Naive thymus-derived CD4-positive, alpha-beta T cell (primary cell): ENCODE measurements at regions of chr11 and their contacts with region 1.

Region 1: GRCh38 chr11:68839054-68839865 is 2.5 kb downstream of the CPT1A start:
- DNase-seq: peak; percentile 87 to 94 (median 92)
- ATAC-seq: peak; percentile 88
- H3K4me3 ChIP-seq: peak overlapping the region; percentile 81
- H3K4me3 Mint-ChIP-seq: peak overlapping the region; percentile 85 to 93 (median 90)
- H3K27ac ChIP-seq: peak overlapping the region; percentile 73
- H3K27ac Mint-ChIP-seq: peak overlapping the region; percentile 81 to 95 (median 93)
- H3K4me1 ChIP-seq: peaks cover 49% of the 10 kb centered on the region in 2 donors
- H3K4me1 Mint-ChIP-seq: peaks cover 31 to 70% (median 52%) of the 10 kb centered on the region in 7 donors
- H3K27me3 ChIP-seq: no peaks in the 10 kb centered on the region
- H3K27me3 Mint-ChIP-seq: peaks cover 0 to 2% (median 0%) of the 10 kb centered on the region in 5 donors

Region 2: GRCh38 chr11:68751004-68751856 is 88.0 kb before region 1 on chr11 and contains the start of gene TESMIN:
- CTCF ChIA-PET with region 1: interaction called, 4 read pairs
- POLR2A ChIA-PET with region 1: no interaction called
- intact Hi-C with region 1: loop called (anchors 1 kb)
- DNase-seq: peak; percentile 73 to 97 (median 88)
- ATAC-seq: peak; percentile 99
- H3K4me3 ChIP-seq: peak within 1 kb of the TSS; percentile 54
- H3K4me3 Mint-ChIP-seq: peak within 1 kb of the TSS; percentile 65 to 90 (median 78)
- H3K27ac ChIP-seq: no peak within 1 kb of the TSS
- H3K27ac Mint-ChIP-seq: peak within 1 kb of the TSS in 8 of 9 donors; percentile 5 to 84 (median 66)
- H3K4me1 ChIP-seq: no peaks in the 10 kb centered on the region
- H3K4me1 Mint-ChIP-seq: peaks cover 7 to 19% (median 13%) of the 10 kb centered on the region in 7 donors
- H3K27me3 ChIP-seq: no peaks in the 10 kb centered on the region
- H3K27me3 Mint-ChIP-seq: peaks cover 0 to 7% (median 0%) of the 10 kb centered on the region in 5 donors
- total RNA-seq, gene TESMIN: 5.0 to 9.3 (median 6.6) TPM

Region 3: GRCh38 chr11:68855205-68855981 is 16.1 kb after region 1 on chr11:
- CTCF ChIA-PET with region 1: interaction called, 4 read pairs
- POLR2A ChIA-PET with region 1: no interaction called
- intact Hi-C with region 1: loop called in 1 of 2 experiments (anchors 2 kb)
- DNase-seq: peak in 3 of 9 donors; percentile 11 to 29 (median 21)
- ATAC-seq: peak; percentile 69
- H3K4me3 ChIP-seq: peak overlapping the region; percentile 39
- H3K4me3 Mint-ChIP-seq: peak overlapping the region; percentile 7 to 86 (median 74)
- H3K27ac ChIP-seq: no peak overlapping the region
- H3K27ac Mint-ChIP-seq: no peak overlapping the region
- H3K4me1 ChIP-seq: peaks cover 4% of the 10 kb centered on the region in 2 donors
- H3K4me1 Mint-ChIP-seq: peaks cover 0 to 11% (median 5%) of the 10 kb centered on the region in 7 donors
- H3K27me3 ChIP-seq: peaks cover 0 to 6% of the 10 kb centered on the region in 2 donors
- H3K27me3 Mint-ChIP-seq: peaks cover 14 to 55% (median 18%) of the 10 kb centered on the region in 5 donors

Region 4: DNA sequence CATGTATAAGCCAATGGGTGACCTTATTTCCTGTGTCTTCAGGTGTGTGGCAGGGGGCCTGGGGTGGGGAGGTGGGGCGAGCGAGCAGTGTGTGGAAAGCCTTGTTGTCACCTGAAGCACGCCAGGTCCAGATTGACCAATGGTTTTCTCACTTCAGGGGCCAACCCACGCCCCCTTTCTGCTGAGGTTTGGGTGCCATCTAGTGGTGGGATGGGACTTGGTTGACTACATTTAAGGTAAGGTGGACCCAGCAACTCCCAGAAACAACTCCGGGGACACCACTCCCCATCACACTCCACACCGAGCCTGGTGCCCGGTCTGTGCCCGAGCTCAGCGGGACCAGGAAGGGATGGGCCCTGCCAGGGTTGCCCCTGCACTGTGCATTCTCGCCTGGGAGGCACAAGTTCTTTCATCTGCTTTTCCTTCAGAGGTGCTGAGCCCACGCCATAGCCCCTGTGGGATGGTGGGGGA is 249.5 kb after region 1 on chr11:
- CTCF ChIA-PET with region 1: no interaction called
- POLR2A ChIA-PET with region 1: no interaction called
- intact Hi-C with region 1: loop called in 1 of 2 experiments (anchors 5 kb)
- DNase-seq: peak in 7 of 9 donors; percentile 23 to 54 (median 38)
- ATAC-seq: peak; percentile 78
- H3K4me3 ChIP-seq: no peak overlapping the region
- H3K4me3 Mint-ChIP-seq: no peak overlapping the region
- H3K27ac ChIP-seq: no peak overlapping the region
- H3K27ac Mint-ChIP-seq: peak overlapping the region in 2 of 9 donors; percentile 19 to 36
- H3K4me1 ChIP-seq: no peaks in the 10 kb centered on the region
- H3K4me1 Mint-ChIP-seq: peaks cover 0 to 9% (median 0%) of the 10 kb centered on the region in 7 donors
- H3K27me3 ChIP-seq: no peaks in the 10 kb centered on the region
- H3K27me3 Mint-ChIP-seq: no peaks in the 10 kb centered on the region

Region 5: GRCh38 chr11:69642913-69643632 is 803.8 kb after region 1 on chr11:
- CTCF ChIA-PET with region 1: no interaction called
- POLR2A ChIA-PET with region 1: no interaction called
- intact Hi-C with region 1: loop called (anchors 5 to 10 kb)
- DNase-seq: peak; percentile 57 to 88 (median 83)
- ATAC-seq: peak; percentile 90
- H3K4me3 ChIP-seq: peak overlapping the region; percentile 61
- H3K4me3 Mint-ChIP-seq: peak overlapping the region; percentile 49 to 95 (median 78)
- H3K27ac ChIP-seq: peak overlapping the region; percentile 48
- H3K27ac Mint-ChIP-seq: peak overlapping the region in 1 of 9 donors; percentile 41
- H3K4me1 ChIP-seq: peaks cover 3 to 21% of the 10 kb centered on the region in 2 donors
- H3K4me1 Mint-ChIP-seq: peaks cover 12 to 30% (median 25%) of the 10 kb centered on the region in 7 donors
- H3K27me3 ChIP-seq: peaks cover 9 to 16% of the 10 kb centered on the region in 2 donors
- H3K27me3 Mint-ChIP-seq: peaks cover 23 to 29% (median 26%) of the 10 kb centered on the region in 5 donors